Posterior vena cava (tissue), 2 donors: ENCODE measurements at regions of chr1 and their contacts with region 1.

Region 1: GRCh38 chr1:60033066-60033465 is 40.5 kb downstream of the C1orf87 start:
- DNase-seq: no peak

Region 2: DNA sequence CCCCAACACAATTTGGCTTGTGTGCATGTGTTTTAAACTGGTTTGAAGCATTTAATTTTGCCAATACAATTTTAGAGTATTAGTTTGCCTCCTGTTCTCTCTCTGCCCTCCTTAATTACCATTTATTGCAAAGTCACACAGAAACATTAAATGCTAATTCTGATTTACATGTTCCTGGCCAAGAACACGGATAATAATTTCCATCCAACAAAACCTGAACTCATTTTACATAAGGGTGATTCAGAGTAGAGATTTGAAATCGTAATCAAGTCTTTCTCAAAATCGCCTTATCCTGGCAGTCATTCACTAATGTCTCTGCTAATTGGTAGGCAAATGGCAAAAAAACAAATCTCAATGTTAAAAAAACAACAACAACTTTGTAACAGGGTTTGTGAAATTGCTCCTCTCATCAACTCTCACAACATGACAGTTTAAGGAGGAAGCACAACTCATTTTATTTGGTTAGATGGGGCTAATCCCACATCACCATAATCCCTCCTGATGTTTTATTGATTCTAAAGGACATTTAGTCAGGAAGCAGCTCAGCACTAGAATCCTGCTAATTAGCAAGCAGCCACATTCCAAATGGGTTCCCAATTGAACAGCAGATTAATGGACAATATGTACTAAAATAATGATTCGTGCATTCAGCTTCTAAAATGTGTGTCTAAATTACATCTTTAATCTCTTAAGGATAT is 15.4 kb before region 1 on chr1:
- intact Hi-C with region 1: loop called in 1 of 2 experiments (anchors 1 kb)
- DNase-seq: no peak